Left ventricle myocardium superior (tissue), 1 donor: ENCODE measurements at regions of chr21 and their contacts with region 1.

Region 1: DNA sequence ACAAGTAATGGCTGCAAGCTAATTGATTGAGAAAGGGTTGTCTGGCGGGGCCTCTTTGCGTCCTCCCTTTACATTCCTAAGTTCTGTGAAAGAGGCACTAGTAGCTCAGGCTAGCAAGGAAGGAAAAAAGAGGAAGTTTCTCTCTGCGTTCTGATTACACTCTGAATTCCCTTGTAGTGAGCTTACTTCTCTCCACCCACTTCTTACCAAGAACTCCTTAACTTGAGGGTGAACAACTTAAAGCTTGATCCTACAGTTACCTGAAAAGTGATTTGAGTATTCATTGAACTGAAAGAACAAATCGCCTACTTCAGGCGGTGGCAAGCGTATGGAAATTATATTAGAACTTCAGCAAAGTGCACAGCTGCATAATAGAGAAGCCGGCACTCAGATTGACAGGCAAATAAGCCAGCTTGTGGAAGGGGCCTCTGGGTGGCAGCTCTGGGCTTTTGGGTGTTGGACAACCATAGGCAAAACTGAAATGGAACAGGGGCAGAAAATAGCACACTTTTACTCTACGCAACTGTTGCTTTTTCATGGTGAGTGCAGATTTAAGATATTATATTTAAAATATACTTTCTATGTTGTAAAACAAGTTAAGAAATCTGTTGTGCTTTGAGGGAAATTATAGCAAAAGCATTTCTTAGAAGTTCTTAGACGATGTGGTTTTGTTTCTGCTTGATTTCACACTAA is 464.5 kb downstream of the USP25 start:
- DNase-seq: peak; percentile 69
- ATAC-seq: peak; percentile 95

Region 2: DNA sequence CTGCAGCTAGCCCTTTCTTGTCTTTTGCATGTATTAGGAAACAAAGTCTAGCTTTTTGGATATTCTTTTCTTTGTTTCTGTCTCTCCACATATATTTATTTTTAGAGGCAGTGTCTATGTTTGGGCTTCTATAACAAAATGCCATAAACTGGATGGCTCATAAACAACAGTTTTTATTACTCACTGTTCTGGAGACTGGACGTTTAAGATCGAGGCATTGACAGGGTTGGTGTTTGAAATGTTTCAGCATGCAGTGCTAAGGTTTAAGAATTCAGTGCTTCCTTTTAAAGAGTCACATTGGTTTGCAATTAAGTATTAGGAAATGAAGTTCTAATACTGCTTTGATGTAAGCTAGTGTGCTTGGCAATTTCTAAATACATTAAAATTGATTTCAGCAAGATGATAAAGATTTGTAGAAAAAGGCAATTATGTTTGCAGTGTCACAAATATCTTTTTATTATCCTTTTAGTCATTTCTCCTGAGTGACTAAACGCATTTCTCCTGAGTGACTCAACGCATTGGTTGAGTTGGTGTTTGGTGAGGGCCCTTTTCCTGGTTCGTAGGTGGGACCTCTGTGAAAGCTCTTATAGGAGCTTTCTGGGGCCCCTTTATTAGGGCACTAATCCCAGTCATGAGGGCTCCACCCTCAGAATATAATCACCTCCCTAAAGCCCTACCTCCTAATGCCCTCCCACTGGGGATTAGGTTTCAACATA is 147.5 kb before region 1 on chr21:
- intact Hi-C with region 1: no loop called
- DNase-seq: no peak
- ATAC-seq: no peak

Region 3: GRCh38 chr21:16323596-16323995 is 129.4 kb after region 1 on chr21:
- intact Hi-C with region 1: loop called (anchors 10 kb)
- DNase-seq: no peak
- ATAC-seq: no peak

Region 4: GRCh38 chr21:17032141-17032655 is 838.0 kb after region 1 on chr21:
- intact Hi-C with region 1: no loop called
- DNase-seq: no peak
- ATAC-seq: no peak